Mammary epithelial cell (primary cell): ENCODE measurements at regions of chr19 and their contacts with region 1.

Region 1: GRCh38 chr19:54481322-54481930 is 8.3 kb upstream of the CDC42EP5 start:
- DNase-seq: peak; percentile 22
- H3K4me3 ChIP-seq: no peak overlapping the region
- H3K27ac ChIP-seq: no peak overlapping the region
- H3K4me1 ChIP-seq: no peaks in the 10 kb centered on the region
- H3K27me3 ChIP-seq: peaks cover 1% of the 10 kb centered on the region
- CTCF ChIP-seq: peak; percentile 52 to 68

Region 2: GRCh38 chr19:54674021-54674617 is 192.7 kb after region 1 on chr19:
- CTCF ChIA-PET with region 1: no interaction called
- dilution Hi-C with region 1: no loop called
- in situ Hi-C with region 1: no loop called
- intact Hi-C with region 1: loop called (anchors 1 kb)
- DNase-seq: peak; percentile 8
- H3K4me3 ChIP-seq: no peak overlapping the region
- H3K27ac ChIP-seq: no peak overlapping the region
- H3K4me1 ChIP-seq: no peaks in the 10 kb centered on the region
- H3K27me3 ChIP-seq: no peaks in the 10 kb centered on the region
- CTCF ChIP-seq: peak; percentile 48 to 68